A673 (cell line): ENCODE measurements at regions of chr16 and their contacts with region 1.

Region 1: DNA sequence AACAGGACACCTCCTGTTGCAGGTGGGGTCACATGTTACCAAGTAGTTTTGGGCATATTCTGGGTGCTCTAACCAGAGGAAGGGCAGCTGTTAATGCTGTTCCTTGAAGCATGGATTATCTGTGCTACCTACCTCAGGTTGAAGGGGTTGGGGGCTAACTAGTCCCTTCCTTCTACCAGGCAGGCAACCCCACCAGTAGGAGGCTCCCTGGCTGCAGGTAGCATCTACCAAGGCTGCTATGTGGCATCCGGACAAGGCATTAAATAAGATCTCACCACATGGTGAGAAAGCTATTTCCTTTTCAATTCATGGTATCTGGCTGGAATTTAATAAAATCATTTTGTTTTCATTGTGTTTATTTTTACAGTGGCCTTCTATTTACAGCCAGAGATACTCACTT is 62.5 kb downstream of the CACNG3 start:
- DNase-seq: peak; percentile 62
- H3K4me3 ChIP-seq: no peak overlapping the region
- H3K27ac ChIP-seq: peak overlapping the region; percentile 13
- H3K4me1 ChIP-seq: peaks cover 18% of the 10 kb centered on the region
- H3K27me3 ChIP-seq: no peaks in the 10 kb centered on the region
- CTCF ChIP-seq: peak; percentile 68

Region 2: DNA sequence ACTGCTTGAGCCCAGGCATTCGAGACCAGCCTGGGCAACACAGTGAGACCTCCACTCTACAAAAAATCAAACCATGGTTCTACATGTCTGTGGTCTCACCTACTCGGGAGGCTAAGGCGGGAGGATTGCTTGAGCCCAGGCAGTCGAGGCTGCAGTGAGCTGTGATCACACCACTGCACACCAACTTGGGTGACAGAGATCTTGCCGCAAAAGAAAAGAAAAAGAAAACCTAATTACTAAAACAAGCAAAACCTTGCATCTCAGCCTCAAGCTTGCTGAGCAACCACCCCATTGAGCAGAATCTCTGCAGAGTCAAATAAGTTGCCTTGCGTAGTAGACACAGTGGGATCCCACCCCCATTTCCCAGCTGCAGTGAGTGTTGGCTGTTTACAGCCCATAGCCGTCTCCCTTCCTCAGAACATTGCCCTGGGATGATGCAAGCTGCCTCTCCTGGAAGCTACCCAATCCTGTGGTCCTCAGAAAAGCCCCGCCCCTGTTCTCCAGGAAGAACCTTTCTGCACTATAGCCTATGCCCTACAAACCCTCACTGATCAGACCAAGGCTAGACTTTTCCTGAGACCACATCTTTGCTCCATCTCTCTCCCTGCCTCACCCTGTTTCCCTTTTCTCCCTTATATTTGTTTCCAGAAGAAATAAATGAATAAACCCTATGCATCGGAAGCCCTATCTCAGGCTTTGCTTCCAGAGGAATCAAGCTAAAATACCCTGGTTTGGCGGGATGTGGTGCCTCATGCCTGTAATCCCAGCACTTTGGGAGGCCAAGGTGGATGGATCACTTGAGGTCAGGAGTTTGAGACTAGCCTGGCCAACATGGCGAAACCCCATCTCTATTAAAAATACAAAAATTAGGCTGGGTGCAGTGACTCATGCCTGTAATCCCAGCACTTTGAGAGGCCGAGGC is 588.9 kb before region 1 on chr16:
- CTCF ChIA-PET with region 1: no interaction called
- POLR2A ChIA-PET with region 1: no interaction called
- intact Hi-C with region 1: loop called (anchors 10 kb)
- DNase-seq: peak; percentile 79
- H3K4me3 ChIP-seq: no peak overlapping the region
- H3K27ac ChIP-seq: peak overlapping the region; percentile 40
- H3K4me1 ChIP-seq: peaks cover 12% of the 10 kb centered on the region
- H3K27me3 ChIP-seq: no peaks in the 10 kb centered on the region
- CTCF ChIP-seq: no peak

Region 3: DNA sequence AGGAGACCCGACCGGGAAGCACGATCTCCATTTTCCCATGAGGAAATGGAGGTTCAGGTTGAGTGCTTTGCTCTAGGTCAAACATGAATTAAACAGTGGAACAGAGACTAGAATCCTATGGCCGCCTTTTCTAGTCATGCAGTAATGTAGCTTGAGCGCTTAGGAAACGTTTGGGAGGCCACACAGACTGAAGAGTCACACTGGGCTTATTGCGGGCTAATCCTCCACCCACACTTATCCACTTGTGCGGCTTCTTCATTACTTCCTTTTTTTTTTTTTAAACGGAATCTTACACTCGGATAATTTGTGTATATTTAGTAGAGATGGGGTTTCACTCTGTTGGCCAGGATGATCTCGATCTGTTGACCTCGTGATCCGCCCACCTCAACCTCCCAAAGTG is 36.5 kb before region 1 on chr16:
- CTCF ChIA-PET with region 1: no interaction called
- POLR2A ChIA-PET with region 1: no interaction called
- intact Hi-C with region 1: no loop called
- DNase-seq: peak; percentile 65
- H3K4me3 ChIP-seq: no peak overlapping the region
- H3K27ac ChIP-seq: no peak overlapping the region
- H3K4me1 ChIP-seq: peaks cover 11% of the 10 kb centered on the region
- H3K27me3 ChIP-seq: no peaks in the 10 kb centered on the region
- CTCF ChIP-seq: no peak